Colonic mucosa (tissue), 4 donors: ENCODE measurements at regions of chr17 and their contacts with region 1.

Region 1: DNA sequence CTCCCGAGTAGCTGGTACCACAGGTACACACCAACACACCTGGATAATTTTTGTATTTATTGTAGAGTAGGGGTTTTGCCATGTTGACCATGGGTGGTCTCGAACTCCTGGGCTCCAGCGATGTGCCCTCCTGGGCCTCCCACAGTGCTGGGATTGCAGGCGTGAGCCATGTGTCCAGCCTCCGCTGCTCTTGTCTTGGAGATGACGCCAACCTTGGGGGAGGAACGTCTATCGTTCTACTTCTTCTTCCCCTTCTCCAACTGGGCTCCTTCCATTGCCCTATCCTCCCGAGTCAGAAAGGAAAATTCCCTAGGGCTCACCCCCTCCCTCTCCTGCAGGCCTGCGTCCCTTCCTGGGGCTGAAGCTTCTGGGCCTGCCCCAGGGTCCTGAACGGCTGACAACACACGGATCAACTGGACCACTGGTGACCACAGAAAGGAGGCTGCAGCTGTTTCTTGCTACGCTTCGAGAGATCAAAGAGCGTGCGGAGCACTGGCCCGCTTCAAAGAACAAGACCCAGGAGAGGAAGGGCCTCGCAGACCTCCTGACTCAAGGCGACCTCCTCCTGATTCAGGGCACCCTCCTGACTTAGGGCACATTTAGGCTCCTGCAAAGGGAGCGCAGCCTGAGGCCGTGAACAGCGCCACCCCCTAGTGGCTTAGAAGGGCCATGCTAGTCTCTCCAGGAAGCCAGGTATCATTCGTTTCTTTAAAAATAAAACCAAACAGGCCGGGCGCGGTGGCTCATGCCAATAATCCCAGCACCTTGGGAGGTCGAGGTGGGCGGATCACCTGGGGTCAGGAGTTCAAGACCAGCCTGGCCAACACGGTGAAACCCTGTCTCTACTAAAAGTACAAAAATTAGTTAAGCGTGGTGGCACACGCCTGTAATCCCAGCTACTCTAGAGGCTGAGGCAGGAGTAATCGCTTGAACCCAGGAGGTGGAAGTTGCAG is 48.5 kb upstream of the HELZ start:
- DNase-seq: peak; percentile 64
- H3K4me3 ChIP-seq: peak overlapping the region; percentile 13
- H3K27ac ChIP-seq: no peak overlapping the region
- H3K4me1 ChIP-seq: no peaks in the 10 kb centered on the region
- H3K27me3 ChIP-seq: no peaks in the 10 kb centered on the region
- CTCF ChIP-seq: peak; percentile 65

Region 2: GRCh38 chr17:67105213-67105612 is 188.3 kb before region 1 on chr17:
- intact Hi-C with region 1: no loop called
- DNase-seq: no peak
- H3K4me3 ChIP-seq: no peak overlapping the region
- H3K27ac ChIP-seq: no peak overlapping the region
- H3K4me1 ChIP-seq: no peaks in the 10 kb centered on the region
- H3K27me3 ChIP-seq: no peaks in the 10 kb centered on the region
- CTCF ChIP-seq: no peak

Region 3: DNA sequence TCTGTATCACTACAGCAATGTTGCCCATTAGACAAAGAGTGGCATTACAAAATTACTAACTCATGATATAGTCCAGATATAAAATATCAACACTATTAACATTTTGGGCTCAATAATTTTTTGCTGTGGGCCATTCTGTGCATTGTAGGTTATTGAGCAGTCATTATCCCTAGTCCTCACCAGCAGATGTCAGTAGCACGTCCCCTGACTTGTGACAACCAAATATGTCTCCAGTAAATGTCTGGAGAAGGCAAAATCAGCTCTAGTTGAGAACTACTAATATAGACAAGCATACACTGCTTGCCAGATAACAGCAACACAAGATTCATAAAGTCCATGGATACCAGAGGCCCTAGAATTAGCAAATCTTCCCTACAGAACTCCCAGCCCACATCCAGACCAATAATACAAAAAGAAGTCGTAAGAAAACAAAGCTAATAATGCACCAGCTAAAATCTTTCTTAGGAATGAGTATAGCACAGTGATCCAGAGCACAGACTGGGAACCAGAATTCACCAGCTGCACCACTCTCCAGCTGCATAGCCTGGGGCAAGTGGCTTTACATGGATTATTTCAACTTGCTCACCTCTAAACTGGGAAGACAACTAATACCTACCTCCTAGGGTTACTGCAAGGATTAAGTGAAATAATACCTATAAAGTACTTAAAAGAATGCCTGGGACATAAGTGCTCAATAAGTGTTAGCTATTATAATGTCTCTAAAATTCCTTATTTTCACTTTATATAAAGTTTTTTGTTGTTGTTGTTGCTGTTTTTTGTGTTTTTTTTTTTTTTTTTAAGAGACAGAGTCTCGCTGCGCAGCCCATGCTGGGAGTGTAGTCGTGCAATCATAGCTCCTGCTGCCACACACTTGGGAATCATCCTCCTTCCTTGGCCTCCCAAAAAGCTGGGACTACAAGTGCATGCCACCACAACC is 72.2 kb before region 1 on chr17:
- intact Hi-C with region 1: loop called (anchors 5 kb)
- DNase-seq: no peak
- H3K4me3 ChIP-seq: no peak overlapping the region
- H3K27ac ChIP-seq: no peak overlapping the region
- H3K4me1 ChIP-seq: no peaks in the 10 kb centered on the region
- H3K27me3 ChIP-seq: no peaks in the 10 kb centered on the region
- CTCF ChIP-seq: peak; percentile 28

Region 4: GRCh38 chr17:67245073-67245755 is 48.3 kb before region 1 on chr17 and contains the start of gene HELZ:
- intact Hi-C with region 1: no loop called
- DNase-seq: peak; percentile 85
- H3K4me3 ChIP-seq: peak within 1 kb of the TSS; percentile 100
- H3K27ac ChIP-seq: peak within 1 kb of the TSS; percentile 61
- H3K4me1 ChIP-seq: peaks cover 7% of the 10 kb centered on the region
- H3K27me3 ChIP-seq: no peaks in the 10 kb centered on the region
- CTCF ChIP-seq: no peak
- total RNA-seq, gene HELZ: 38.6 to 55.9 TPM